ENCODE measurements at regions of chr20 and their contacts with region 1.

Region 1: DNA sequence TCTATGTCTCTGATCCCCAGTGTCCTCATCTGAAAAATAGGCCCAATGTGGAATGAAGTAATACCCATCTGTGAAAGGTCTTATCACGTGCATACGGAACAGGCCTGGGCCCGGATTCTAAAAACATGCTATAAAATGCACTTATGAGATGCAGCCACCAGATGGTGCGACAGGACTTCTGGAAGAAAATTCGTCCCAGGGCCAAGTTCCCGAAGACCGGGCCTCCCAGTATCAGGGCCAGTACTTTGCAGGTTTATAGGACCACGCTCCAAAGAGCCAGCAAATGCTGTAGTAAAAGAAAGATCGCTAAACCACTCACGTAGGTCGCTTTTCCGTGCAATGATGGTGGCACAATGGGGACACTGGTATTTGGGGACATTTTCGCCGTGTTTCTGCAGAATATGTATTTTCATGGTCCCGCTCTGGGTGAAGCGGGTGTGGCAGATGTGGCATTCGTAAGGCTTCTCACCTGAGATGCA is 10.6 kb downstream of the CTCFL start:
- DNase-seq: no peak
- H3K4me3 ChIP-seq: no peak overlapping the region
- H3K27ac ChIP-seq: no peak overlapping the region
- H3K4me1 ChIP-seq: peaks cover 0 to 10% (median 0%) of the 10 kb centered on the region in 3 donors
- H3K27me3 ChIP-seq: peaks cover 0 to 5% (median 0%) of the 10 kb centered on the region in 4 donors
- CTCF ChIP-seq: peak; percentile 47 to 92 (median 86)
- POLR2A ChIP-seq: no peak

Region 2: GRCh38 chr20:58228484-58229197 is 714.3 kb after region 1 on chr20 and contains the start of gene ANKRD60:
- intact Hi-C with region 1: loop called (anchors 10 kb)
- DNase-seq: no peak
- H3K4me3 ChIP-seq: peak within 1 kb of the TSS in 2 of 4 donors; percentile 27 to 53
- H3K27ac ChIP-seq: no peak within 1 kb of the TSS
- H3K4me1 ChIP-seq: peaks cover 0 to 13% (median 7%) of the 10 kb centered on the region in 3 donors
- H3K27me3 ChIP-seq: peaks cover 6 to 68% (median 11%) of the 10 kb centered on the region in 4 donors
- CTCF ChIP-seq: no peak
- POLR2A ChIP-seq: no peak
- total RNA-seq, gene ANKRD60: not detected

Measured in esophagus squamous epithelium (tissue), 5 donors.